ENCODE measurements at regions of chr2 and their contacts with region 1.

Region 1: GRCh38 chr2:59502981-59503380 is 1050.5 kb downstream of the BCL11A start:
- DNase-seq: no peak
- ATAC-seq: no peak
- H3K4me3 Mint-ChIP-seq: no peak overlapping the region
- H3K27ac Mint-ChIP-seq: no peak overlapping the region
- H3K4me1 Mint-ChIP-seq: no peaks in the 10 kb centered on the region
- H3K27me3 Mint-ChIP-seq: no peaks in the 10 kb centered on the region; the same call in 1 of the 2 replicates
- CTCF ChIP-seq: no peak

Region 2: GRCh38 chr2:59378127-59378526 is 124.9 kb before region 1 on chr2:
- CTCF ChIA-PET with region 1: no interaction called
- POLR2A ChIA-PET with region 1: interaction called, 10 read pairs
- DNase-seq: no peak
- ATAC-seq: no peak
- H3K4me3 Mint-ChIP-seq: no peak overlapping the region
- H3K27ac Mint-ChIP-seq: no peak overlapping the region
- H3K4me1 Mint-ChIP-seq: peaks cover 6% of the 10 kb centered on the region
- H3K27me3 Mint-ChIP-seq: no peaks in the 10 kb centered on the region
- CTCF ChIP-seq: no peak

Region 3: DNA sequence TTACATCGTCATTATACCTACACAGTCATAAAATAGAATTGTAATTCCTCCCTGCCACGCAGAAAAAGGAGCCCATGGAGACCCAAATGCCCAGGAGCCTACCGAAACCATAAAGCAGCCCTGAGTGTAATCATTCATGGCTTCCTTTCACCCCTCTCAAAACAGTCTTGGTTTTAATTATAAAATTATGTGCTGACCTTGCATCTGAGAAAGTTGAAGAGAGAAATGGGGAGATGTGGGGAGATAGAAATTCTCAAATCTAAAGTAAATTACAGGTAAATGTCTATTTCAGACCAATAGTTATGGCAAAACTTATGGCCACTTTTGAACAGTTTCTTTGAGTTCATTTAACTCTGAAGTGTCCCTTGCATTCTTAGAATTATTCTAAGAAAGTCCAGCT is 18.3 kb before region 1 on chr2:
- CTCF ChIA-PET with region 1: no interaction called
- POLR2A ChIA-PET with region 1: no interaction called
- DNase-seq: no peak
- ATAC-seq: no peak
- H3K4me3 Mint-ChIP-seq: no peak overlapping the region
- H3K27ac Mint-ChIP-seq: no peak overlapping the region
- H3K4me1 Mint-ChIP-seq: no peaks in the 10 kb centered on the region; the same call in 1 of the 2 replicates
- H3K27me3 Mint-ChIP-seq: no peaks in the 10 kb centered on the region
- CTCF ChIP-seq: no peak